Endothelial cell of umbilical vein (primary cell): ENCODE measurements at regions of chr4 and their contacts with region 1.

Region 1: GRCh38 chr4:1512738-1513660 is 106.8 kb upstream of the NKX1-1 start:
- DNase-seq: peak; percentile 5
- H3K4me3 ChIP-seq: peak overlapping the region in 1 of 3 experiments; percentile 12
- H3K27ac ChIP-seq: no peak overlapping the region
- H3K4me1 ChIP-seq: no peaks in the 10 kb centered on the region
- H3K27me3 ChIP-seq: no peaks in the 10 kb centered on the region
- CTCF ChIP-seq: peak; percentile 60 to 65
- POLR2A ChIP-seq: no peak

Region 2: DNA sequence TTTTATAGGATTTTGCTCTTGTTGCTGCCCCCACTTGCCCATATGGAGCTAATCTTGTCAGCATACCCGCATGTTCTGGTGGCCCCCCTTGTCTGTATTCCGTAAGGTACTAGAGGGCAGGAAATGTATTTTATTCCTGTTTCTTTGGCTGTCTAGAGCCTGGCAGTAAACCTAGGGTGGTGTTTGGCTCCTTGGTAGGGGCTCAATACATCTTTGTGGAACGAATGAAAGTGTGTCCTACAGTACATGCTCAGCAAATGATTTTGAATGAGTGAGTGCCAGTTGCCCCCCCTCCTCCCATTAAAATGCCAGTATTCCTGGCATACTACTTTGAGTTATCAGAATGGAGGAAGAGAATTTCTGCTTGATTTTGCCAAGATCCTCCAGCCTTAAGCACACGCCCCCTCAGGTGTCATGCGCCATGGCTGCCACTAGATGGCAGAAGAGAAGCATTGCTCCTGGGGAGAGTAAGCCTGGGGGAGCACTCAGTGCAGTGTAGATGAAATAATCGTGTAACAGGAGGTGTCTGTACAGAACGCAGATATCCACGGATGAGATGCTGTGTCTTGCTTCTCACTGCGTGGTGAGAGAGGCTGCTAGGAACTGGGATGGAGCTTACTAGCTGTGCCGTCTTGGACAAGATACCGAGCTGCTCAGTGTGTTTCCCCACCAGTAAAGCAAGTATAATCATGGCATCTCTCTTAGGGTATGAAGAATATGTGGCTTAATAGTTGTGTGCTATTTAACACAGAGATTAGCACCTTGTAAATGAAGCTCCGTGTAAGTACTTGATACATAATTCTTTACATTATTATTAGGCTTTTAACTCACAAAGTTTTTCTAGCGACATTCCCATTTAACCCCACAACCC is 382.4 kb before region 1 on chr4:
- CTCF ChIA-PET with region 1: interaction called, 11 read pairs
- POLR2A ChIA-PET with region 1: no interaction called
- dilution Hi-C with region 1: no loop called
- intact Hi-C with region 1: no loop called
- DNase-seq: peak; percentile 88
- H3K4me3 ChIP-seq: no peak overlapping the region
- H3K27ac ChIP-seq: no peak overlapping the region
- H3K4me1 ChIP-seq: no peaks in the 10 kb centered on the region
- H3K27me3 ChIP-seq: peaks cover 2 to 3% of the 10 kb centered on the region in 2 experiments
- CTCF ChIP-seq: peak; percentile 94 to 98
- POLR2A ChIP-seq: no peak

Region 3: DNA sequence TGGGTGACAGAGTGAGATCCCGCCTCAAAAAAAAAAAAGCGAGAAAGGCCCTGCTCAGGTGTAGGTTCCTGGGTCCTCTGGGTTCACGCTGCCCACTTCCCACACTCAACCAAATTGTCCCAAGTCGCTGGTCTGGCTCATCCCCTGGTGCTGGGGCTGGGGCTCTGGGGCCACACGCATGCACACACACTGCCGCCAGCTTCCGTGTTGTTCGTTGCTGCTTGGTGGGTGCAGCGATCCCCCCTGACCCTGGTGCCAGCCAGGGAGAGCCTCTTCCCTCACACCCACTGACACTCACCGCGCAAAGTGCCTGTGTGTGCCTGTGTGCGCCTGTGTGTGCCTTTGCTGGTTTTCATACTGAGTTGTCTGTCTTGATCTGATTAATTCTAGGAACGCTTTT is 17.4 kb after region 1 on chr4:
- CTCF ChIA-PET with region 1: interaction called, 11 read pairs
- POLR2A ChIA-PET with region 1: no interaction called
- dilution Hi-C with region 1: no loop called
- intact Hi-C with region 1: no loop called
- DNase-seq: no peak
- H3K4me3 ChIP-seq: no peak overlapping the region
- H3K27ac ChIP-seq: no peak overlapping the region
- H3K4me1 ChIP-seq: no peaks in the 10 kb centered on the region
- H3K27me3 ChIP-seq: peaks cover 0 to 5% of the 10 kb centered on the region in 2 experiments
- CTCF ChIP-seq: no peak
- POLR2A ChIP-seq: no peak

Region 4: DNA sequence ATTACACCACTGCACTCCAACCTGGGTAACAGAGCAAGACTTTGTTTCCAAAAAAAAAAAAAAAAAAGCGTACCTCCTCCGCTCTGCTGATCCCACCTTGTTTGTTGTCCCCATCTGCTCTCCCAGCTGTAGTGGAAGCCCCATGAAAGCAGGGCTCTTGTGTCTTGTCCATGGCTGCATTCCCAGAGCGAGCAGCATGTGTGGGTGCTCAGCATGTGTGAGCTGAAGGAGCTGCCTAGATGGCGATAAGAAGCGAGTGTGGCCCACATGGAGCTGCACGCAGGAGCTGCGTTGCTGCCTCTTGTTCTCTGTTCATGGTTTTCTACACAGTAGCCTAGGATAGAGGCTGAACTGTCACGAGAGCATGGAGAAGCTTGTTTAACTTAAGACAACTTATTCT is 370.6 kb after region 1 on chr4:
- CTCF ChIA-PET with region 1: no interaction called
- POLR2A ChIA-PET with region 1: no interaction called
- dilution Hi-C with region 1: no loop called
- intact Hi-C with region 1: no loop called
- DNase-seq: no peak
- H3K4me3 ChIP-seq: no peak overlapping the region
- H3K27ac ChIP-seq: no peak overlapping the region
- H3K4me1 ChIP-seq: no peaks in the 10 kb centered on the region
- H3K27me3 ChIP-seq: no peaks in the 10 kb centered on the region
- CTCF ChIP-seq: no peak
- POLR2A ChIP-seq: no peak